HEK293T (cell line): ENCODE measurements at regions of chrX and their contacts with region 1.

Region 1: GRCh38 chrX:19303256-19303880 is 40.4 kb upstream of the PDHA1 start:
- DNase-seq: no peak

Region 2: GRCh38 chrX:19225924-19226323 is 77.4 kb before region 1 on chrX:
- CTCF ChIA-PET with region 1: no interaction called
- POLR2A ChIA-PET with region 1: no interaction called
- DNase-seq: peak; percentile 14

Region 3: GRCh38 chrX:19272452-19272851 is 30.9 kb before region 1 on chrX:
- CTCF ChIA-PET with region 1: no interaction called
- POLR2A ChIA-PET with region 1: no interaction called
- DNase-seq: no peak

Region 4: DNA sequence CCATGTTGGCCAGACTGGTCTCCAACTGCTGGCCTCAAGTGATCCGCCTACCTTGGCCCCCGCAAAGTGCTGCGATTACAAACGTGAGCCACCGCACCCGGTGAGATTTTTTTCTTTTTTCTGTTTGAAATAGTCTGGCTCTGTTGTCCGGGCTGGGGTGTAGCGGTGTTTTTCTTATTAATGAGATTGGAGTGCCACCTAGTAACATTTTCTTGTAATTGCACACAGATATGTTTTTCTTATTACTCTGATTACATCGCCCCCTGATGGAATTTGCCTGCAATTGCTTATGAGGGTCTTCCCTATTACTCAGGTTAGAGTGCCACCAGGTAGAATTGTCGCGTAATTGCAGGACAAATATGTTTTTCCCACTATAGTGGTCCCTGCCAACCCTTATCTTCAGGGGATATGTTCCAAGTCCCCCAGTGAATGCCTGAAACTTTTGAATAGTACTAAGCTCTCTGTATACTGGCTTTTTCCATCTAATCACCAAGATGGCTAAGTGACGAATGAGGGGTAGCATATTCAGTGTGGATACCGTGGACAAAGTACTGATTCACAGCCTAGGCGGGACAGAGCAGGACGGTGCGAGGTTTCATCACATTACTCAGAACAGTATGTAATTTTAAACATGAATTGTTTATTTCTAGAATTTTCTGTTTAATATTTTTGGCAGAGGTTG is 31.7 kb after region 1 on chrX:
- CTCF ChIA-PET with region 1: interaction called, 10 read pairs
- POLR2A ChIA-PET with region 1: no interaction called
- DNase-seq: peak; percentile 25

Region 5: DNA sequence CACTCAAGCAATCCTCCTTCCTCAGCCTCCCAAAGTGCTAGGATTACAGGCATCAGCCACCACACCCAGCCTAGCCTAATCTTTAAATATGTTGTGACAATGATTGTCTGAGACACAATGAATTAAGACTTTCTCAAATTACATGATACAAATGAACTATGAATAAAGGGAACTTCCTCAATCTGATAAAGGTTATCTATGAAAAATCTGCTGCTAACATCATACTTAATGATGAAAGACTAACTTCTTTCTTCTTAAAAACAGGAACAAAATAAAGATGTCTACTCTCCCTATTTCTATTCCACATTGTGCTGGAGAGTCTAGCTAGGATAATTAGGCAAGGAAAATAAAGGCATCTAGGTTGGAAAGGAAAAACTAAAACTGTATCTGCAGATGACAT is 100.3 kb after region 1 on chrX:
- CTCF ChIA-PET with region 1: no interaction called
- POLR2A ChIA-PET with region 1: no interaction called
- DNase-seq: no peak